WTC11 (cell line): ENCODE measurements at regions of chr2 and their contacts with region 1.

Region 1: GRCh38 chr2:219402665-219403515 is 15.2 kb upstream of the DNPEP start:
- DNase-seq: peak; percentile 76
- ATAC-seq: peak; percentile 70
- H3K4me3 Mint-ChIP-seq: no peak overlapping the region
- H3K27ac Mint-ChIP-seq: no peak overlapping the region
- H3K4me1 Mint-ChIP-seq: peaks cover 46% of the 10 kb centered on the region
- H3K27me3 Mint-ChIP-seq: no peaks in the 10 kb centered on the region; the same call in 1 of the 2 replicates
- CTCF ChIP-seq: peak; percentile 83; the same call in 1 of the 2 replicates

Region 2: DNA sequence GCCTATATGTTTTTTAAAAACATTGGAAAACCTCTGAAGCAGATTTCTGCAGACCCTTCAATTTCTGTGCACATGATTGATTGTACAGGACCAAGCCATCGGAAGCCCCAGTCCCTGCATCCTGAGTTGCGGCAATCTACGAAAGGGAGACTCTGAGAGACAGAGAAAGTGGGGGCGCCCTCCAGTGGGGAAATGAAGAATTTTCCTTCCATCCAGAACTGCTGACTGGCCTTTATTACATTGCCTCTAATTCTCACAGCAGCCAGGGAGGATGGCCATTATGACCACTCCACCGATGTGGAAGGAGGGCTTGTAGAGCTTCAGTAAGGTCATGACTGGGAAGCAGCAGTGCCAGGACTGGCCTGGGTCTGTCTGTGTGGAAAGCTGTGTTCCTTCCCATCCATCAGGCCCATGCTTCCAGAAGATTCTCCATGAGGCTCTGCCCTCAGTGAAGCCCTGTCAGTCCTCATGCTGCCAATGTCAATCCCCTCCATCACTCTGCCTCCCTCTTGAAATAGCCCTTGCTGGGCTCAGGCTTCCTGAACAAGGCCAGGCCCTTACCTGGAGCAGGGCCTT is 50.4 kb before region 1 on chr2:
- CTCF ChIA-PET with region 1: no interaction called
- POLR2A ChIA-PET with region 1: no interaction called
- DNase-seq: peak; percentile 88
- ATAC-seq: peak; percentile 89
- H3K4me3 Mint-ChIP-seq: no peak overlapping the region
- H3K27ac Mint-ChIP-seq: no peak overlapping the region
- H3K4me1 Mint-ChIP-seq: no peaks in the 10 kb centered on the region
- H3K27me3 Mint-ChIP-seq: peaks cover 53% of the 10 kb centered on the region
- CTCF ChIP-seq: peak; percentile 85

Region 3: GRCh38 chr2:219362524-219363164 is 40.2 kb before region 1 on chr2:
- CTCF ChIA-PET with region 1: no interaction called
- POLR2A ChIA-PET with region 1: no interaction called
- DNase-seq: no peak
- ATAC-seq: no peak
- H3K4me3 Mint-ChIP-seq: no peak overlapping the region
- H3K27ac Mint-ChIP-seq: no peak overlapping the region
- H3K4me1 Mint-ChIP-seq: peaks cover 2% of the 10 kb centered on the region; the same call in 1 of the 2 replicates
- H3K27me3 Mint-ChIP-seq: peaks cover 41% of the 10 kb centered on the region
- CTCF ChIP-seq: no peak

Region 4: GRCh38 chr2:219418155-219418569 is 15.3 kb after region 1 on chr2 and contains the start of gene DES:
- CTCF ChIA-PET with region 1: interaction called, 77 read pairs
- POLR2A ChIA-PET with region 1: no interaction called
- DNase-seq: no peak
- ATAC-seq: no peak
- H3K4me3 Mint-ChIP-seq: peak within 1 kb of the TSS; percentile 37
- H3K27ac Mint-ChIP-seq: no peak within 1 kb of the TSS
- H3K4me1 Mint-ChIP-seq: peaks cover 28% of the 10 kb centered on the region
- H3K27me3 Mint-ChIP-seq: peaks cover 38% of the 10 kb centered on the region
- CTCF ChIP-seq: no peak
- total RNA-seq, gene DES: 1.6 to 3.5 TPM (median 2.8 TPM) in 3 replicates

Region 5: DNA sequence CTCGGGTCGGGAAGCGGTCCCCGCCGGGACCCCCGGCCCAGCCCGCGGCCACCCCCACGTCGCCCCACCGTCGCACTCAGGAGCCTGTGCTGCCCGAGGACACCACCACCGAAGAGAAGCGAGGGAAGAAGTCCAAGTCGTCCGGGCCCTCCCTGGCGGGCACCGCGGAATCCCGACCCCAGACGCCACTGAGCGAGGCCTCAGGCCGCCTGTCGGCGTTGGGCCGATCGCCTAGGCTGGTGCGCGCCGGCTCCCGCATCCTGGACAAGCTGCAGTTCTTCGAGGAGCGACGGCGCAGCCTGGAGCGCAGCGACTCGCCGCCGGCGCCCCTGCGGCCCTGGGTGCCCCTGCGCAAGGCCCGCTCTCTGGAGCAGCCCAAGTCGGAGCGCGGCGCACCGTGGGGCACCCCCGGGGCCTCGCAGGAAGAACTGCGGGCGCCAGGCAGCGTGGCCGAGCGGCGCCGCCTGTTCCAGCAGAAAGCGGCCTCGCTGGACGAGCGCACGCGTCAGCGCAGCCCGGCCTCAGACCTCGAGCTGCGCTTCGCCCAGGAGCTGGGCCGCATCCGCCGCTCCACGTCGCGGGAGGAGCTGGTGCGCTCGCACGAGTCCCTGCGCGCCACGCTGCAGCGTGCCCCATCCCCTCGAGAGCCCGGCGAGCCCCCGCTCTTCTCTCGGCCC is 45.3 kb after region 1 on chr2:
- CTCF ChIA-PET with region 1: interaction called, 23 read pairs
- POLR2A ChIA-PET with region 1: no interaction called
- DNase-seq: peak; percentile 69
- ATAC-seq: peak; percentile 43
- H3K4me3 Mint-ChIP-seq: peak overlapping the region; percentile 33; the same call in 1 of the 2 replicates
- H3K27ac Mint-ChIP-seq: no peak overlapping the region
- H3K4me1 Mint-ChIP-seq: peaks cover 13% of the 10 kb centered on the region
- H3K27me3 Mint-ChIP-seq: peaks cover 7% of the 10 kb centered on the region
- CTCF ChIP-seq: no peak

Region 6: DNA sequence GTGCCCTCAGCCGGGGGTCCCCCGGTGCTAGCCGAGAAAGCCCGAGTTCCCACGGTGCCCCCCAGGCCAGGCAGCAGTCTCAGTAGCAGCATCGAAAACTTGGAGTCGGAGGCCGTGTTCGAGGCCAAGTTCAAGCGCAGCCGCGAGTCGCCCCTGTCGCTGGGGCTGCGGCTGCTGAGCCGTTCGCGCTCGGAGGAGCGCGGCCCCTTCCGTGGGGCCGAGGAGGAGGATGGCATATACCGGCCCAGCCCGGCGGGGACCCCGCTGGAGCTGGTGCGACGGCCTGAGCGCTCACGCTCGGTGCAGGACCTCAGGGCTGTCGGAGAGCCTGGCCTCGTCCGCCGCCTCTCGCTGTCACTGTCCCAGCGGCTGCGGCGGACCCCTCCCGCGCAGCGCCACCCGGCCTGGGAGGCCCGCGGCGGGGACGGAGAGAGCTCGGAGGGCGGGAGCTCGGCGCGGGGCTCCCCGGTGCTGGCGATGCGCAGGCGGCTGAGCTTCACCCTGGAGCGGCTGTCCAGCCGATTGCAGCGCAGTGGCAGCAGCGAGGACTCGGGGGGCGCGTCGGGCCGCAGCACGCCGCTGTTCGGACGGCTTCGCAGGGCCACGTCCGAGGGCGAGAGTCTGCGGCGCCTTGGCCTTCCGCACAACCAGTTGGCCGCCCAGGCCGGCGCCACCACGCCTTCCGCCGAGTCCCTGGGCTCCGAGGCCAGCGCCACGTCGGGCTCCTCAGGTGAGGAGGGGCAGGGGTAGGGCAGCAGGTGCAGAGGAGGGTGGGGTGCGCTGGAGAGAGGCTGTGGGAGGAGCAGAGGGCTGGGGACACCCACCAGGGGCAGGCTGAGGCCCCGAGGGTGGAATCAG is 81.7 kb after region 1 on chr2:
- CTCF ChIA-PET with region 1: interaction called, 23 read pairs
- POLR2A ChIA-PET with region 1: no interaction called
- DNase-seq: peak; percentile 65
- ATAC-seq: peak; percentile 20
- H3K4me3 Mint-ChIP-seq: peak overlapping the region; percentile 52
- H3K27ac Mint-ChIP-seq: no peak overlapping the region
- H3K4me1 Mint-ChIP-seq: peaks cover 35% of the 10 kb centered on the region
- H3K27me3 Mint-ChIP-seq: peaks cover 32% of the 10 kb centered on the region
- CTCF ChIP-seq: no peak

Region 7: DNA sequence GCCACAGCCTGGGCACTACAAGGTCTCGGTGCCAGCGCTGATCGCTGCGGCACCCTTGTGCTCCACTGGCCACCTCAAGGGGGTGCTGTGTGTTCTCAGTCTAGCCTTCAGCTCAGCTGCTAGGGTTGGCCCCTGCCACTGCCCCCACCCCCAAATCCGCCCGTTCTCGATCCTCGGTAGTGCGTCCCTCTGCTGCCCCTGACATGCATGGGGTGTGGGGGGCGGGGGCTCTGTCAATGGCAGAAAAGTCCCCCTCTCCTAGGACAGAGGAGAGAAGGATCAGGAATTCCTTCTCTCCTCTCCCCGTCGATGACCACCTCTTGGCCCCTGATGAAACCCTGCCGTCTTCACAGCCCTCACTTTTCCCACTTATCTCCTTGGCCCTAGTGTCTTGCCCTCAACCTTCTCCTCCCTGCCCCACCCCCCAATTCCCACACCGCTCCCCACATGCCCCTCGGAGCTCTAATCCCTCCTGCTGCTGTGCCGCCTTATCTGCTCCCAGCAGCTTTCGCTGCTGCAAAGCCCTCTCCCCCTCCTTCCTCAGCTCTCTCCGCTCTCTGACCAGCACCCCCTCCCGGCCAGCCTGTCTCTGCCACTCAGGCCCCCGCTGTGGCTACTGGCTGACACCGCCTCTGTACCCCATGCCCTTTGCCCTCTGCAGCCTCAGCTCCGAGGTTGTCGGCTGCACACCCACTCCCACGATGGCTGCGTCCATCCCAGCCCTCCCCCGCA is 107.1 kb after region 1 on chr2:
- CTCF ChIA-PET with region 1: interaction called, 26 read pairs
- POLR2A ChIA-PET with region 1: no interaction called
- DNase-seq: peak; percentile 82
- ATAC-seq: peak; percentile 57
- H3K4me3 Mint-ChIP-seq: peak overlapping the region; percentile 72
- H3K27ac Mint-ChIP-seq: no peak overlapping the region
- H3K4me1 Mint-ChIP-seq: peaks cover 70% of the 10 kb centered on the region
- H3K27me3 Mint-ChIP-seq: peaks cover 41% of the 10 kb centered on the region
- CTCF ChIP-seq: peak; percentile 31

Region 8: GRCh38 chr2:219552382-219553167 is 149.7 kb after region 1 on chr2:
- CTCF ChIA-PET with region 1: no interaction called
- POLR2A ChIA-PET with region 1: no interaction called
- DNase-seq: peak; percentile 94
- ATAC-seq: peak; percentile 90
- H3K4me3 Mint-ChIP-seq: peak overlapping the region; percentile 93
- H3K27ac Mint-ChIP-seq: no peak overlapping the region
- H3K4me1 Mint-ChIP-seq: peaks cover 10% of the 10 kb centered on the region
- H3K27me3 Mint-ChIP-seq: peaks cover 38% of the 10 kb centered on the region
- CTCF ChIP-seq: no peak